Right ventricle myocardium inferior (tissue), 1 donor: ENCODE measurements at regions of chr17 and their contacts with region 1.

Region 1: DNA sequence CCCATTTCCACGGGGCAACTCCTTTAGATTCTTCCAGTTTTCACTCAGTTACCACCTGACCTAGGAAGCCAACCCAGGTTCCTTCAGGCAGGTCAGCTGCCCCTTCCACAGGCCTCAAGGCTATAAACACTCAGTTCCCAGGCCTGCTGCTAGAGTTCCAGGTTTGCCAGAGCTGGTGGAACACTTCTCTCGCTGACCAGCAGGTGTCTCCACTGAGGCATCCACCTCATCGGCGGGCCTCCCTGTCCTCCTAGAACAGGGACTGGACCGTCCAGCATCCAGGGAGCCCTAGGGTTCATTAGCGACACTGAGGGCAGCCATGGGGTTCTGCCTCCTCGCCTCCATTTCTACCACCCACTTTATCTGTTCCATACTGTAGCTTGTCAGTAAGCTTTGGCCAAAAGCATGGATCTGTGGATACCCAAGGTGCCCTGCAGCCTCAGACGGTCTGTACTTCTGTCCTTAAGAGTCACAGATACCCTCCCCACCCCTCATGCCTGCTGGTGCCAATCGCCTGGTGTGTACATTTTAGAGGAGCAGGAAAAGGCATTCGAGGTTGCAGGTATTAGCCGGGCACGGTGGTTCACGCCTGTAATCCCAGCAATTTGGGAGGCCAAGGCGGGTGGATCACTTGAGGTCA is 29.0 kb downstream of the PIMREG start:
- DNase-seq: peak; percentile 79
- ATAC-seq: peak; percentile 54

Region 2: DNA sequence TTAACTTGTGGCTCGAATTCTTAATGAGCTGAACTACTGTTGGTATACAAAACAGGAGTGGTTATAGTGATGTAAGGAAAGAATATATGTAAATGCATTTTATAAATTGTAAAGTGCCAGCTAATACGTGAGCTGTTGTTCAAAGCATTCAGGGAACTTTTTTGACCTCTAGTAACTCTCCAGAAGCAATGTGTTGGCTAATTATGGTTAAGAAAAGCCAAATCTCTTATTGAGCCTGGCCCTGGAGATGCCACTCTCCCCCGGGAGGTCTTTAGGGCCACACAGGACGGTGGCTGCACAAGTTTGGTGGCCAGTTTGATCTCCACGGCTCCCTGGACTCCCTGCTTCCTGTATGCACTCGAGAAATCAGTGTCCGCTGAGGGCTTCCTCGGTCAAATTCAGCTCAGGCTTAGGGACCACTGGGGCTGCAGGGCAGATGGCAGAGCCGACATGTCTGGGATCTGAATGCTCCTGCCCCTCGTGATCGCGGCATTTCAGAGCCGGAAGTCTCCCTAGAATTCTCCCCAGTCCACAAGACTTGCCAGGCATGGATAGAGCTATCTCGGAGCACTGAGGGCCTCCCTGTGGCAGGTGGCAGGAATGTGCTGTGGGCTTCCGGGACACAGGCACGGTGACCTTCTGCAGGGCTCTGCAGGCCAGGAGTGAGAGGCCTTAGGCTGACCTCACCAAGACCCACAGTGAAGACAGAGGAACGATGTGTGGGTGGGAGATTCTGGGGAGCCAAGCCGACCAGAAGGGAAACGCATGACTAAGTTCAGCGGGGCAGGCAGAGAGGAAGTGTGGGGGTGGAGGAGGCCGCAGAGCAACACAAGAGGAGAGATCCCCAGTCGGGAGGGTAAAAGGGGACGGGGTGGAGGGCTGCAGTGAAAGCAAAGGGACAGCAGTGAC is 101.7 kb after region 1 on chr17:
- intact Hi-C with region 1: loop called (anchors 5 kb)
- DNase-seq: no peak
- ATAC-seq: peak; percentile 77

Region 3: DNA sequence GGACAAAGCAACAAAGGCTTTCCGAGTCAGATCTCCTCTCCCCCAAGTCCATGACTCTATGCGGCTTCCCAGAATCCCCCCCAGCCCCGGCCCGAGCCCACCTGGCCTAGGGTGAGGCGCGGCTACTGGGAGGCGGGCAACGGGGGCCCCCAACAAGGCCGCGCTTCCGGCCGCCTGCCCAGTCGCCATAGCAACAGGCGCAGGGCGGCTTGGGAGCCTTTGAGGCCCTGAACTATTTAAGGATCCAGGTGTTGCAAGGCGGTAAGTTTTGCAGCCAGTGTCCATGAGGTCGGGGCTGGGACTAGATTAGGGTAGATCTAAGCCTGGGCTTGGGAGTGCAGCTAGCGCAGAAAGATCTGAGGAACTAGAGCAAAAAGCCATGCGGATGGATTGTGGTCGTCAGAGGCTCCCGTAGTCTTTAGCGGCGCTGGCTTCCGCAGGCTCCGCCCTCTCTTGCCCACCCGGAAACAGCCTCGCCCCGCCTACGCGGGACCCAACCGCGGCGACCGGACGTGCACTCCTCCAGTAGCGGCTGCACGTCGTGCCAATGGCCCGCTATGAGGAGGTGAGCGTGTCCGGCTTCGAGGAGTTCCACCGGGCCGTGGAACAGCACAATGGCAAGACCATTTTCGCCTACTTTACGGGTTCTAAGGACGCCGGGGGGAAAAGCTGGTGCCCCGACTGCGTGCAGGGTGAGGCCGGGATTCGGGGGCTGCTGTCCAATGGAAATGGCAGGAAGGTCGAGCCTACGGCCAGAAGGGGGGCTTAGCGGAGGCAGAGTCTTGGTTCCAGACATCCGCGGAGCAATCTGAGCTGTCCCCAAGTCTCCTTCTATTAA is 167.5 kb after region 1 on chr17 and contains the starts of genes KIAA0753 and TXNDC17:
- intact Hi-C with region 1: loop called (anchors 5 kb)
- DNase-seq: peak; percentile 96
- ATAC-seq: peak; percentile 98
- total RNA-seq, gene KIAA0753: 5.1 TPM
- total RNA-seq, gene TXNDC17: 52.9 TPM